ENCODE measurements at regions of chr19 and their contacts with region 1.

Region 1: DNA sequence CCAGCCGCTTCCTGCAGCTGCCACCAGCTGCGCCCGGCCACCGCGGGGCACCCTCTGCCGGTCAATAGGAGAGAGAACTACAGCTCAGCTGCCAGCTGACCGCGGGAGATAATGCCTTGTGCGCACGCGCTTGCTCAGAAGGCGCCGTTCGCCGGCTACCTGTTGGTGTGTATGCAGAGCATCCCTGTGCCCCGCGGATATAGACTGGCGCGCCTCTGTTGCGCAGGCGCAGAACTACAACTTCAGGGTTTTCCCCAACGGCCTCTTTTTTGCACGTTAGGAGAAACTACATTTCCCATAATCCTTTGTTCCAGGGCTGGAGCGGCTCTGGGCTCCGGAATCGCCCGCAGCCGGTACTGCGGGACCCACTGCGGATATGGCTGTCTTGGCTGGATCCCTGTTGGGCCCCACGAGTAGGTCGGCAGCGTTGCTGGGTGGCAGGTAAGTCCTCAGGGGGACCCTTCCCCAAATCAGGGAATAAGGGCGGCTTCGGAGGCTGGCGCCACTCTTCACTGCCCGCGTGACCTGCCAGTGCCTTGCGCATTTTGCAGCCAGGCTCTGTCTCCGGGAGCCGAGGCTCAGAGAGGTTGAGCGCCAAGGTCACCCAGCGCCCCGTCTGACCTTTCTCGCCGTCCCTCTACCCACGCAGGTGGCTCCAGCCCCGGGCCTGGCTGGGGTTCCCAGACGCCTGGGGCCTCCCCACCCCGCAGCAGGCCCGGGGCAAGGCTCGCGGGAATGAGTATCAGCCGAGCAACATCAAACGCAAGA is at the start of gene MRPL34:
- DNase-seq: peak; percentile 97
- H3K4me3 Mint-ChIP-seq: peak within 1 kb of the TSS; percentile 89
- H3K27ac Mint-ChIP-seq: peak within 1 kb of the TSS; percentile 85
- H3K4me1 Mint-ChIP-seq: peaks cover 67% of the 10 kb centered on the region
- H3K27me3 Mint-ChIP-seq: no peaks in the 10 kb centered on the region

Region 2: GRCh38 chr19:17266975-17267788 is 38.5 kb before region 1 on chr19 and contains the start of gene BABAM1:
- CTCF ChIA-PET with region 1: no interaction called
- DNase-seq: peak; percentile 98
- H3K4me3 Mint-ChIP-seq: peak within 1 kb of the TSS; percentile 80
- H3K27ac Mint-ChIP-seq: peak within 1 kb of the TSS; percentile 85
- H3K4me1 Mint-ChIP-seq: peaks cover 40% of the 10 kb centered on the region
- H3K27me3 Mint-ChIP-seq: no peaks in the 10 kb centered on the region

Region 3: GRCh38 chr19:17292286-17293097 is 13.2 kb before region 1 on chr19:
- CTCF ChIA-PET with region 1: interaction called, 13 read pairs
- DNase-seq: peak; percentile 85
- H3K4me3 Mint-ChIP-seq: peak overlapping the region; percentile 87
- H3K27ac Mint-ChIP-seq: peak overlapping the region; percentile 87
- H3K4me1 Mint-ChIP-seq: peaks cover 12% of the 10 kb centered on the region
- H3K27me3 Mint-ChIP-seq: peaks cover 17% of the 10 kb centered on the region

Region 4: DNA sequence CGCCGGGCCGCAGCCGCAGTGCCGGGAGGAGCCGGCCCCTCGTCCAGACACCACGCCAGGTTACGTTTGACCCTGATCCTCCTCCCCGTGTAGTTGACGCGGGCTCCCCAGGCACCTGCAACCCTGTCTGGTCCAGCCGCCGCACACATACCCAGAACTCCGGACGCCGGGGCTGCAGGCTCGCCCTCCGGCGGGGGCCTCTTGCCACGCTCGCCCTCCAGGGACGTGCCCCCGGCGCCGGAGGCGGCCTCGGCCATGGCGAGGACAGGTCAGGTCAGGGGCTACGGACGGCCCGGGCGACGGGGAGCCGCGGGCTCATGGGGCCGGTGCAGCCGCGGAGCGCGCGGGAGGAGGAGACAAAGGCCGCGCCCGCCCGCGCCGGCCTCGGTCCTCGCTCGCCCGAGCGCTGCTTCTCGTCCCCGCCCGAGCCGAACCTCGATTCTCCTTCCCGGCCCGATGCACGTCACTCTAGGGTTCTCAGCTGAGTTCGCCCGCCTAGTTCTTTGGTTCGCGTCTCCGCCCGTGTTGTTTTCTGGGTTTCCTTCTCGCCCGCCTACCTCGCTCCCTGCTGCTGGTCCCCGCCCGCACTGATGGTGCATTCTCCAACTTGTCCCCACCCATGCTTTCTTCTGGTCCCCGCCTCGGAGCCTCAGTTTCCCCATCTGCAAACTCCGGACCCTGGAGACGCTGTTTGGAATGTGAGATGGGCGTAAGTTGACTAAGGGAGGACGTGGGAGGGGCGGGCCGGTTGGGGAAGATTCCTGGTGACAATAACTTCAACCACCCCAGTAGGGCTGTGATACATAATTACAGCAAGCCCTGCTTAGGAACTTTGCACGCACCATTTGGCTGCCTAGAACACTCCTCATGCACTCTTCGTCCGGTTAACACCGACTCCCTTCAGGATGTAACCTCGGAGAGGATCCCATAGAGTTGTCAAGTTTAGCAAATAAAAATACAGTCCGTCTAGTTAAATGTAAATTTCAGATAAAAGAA is 29.0 kb after region 1 on chr19 and contains the start of gene ANO8:
- CTCF ChIA-PET with region 1: interaction called, 10 read pairs
- DNase-seq: peak; percentile 97
- H3K4me3 Mint-ChIP-seq: peak within 1 kb of the TSS; percentile 78
- H3K27ac Mint-ChIP-seq: peak within 1 kb of the TSS; percentile 88
- H3K4me1 Mint-ChIP-seq: peaks cover 59% of the 10 kb centered on the region
- H3K27me3 Mint-ChIP-seq: peaks cover 27% of the 10 kb centered on the region

Region 5: GRCh38 chr19:17358395-17358794 is 52.7 kb after region 1 on chr19:
- CTCF ChIA-PET with region 1: no interaction called
- DNase-seq: no peak
- H3K4me3 Mint-ChIP-seq: no peak overlapping the region
- H3K27ac Mint-ChIP-seq: no peak overlapping the region
- H3K4me1 Mint-ChIP-seq: no peaks in the 10 kb centered on the region
- H3K27me3 Mint-ChIP-seq: peaks cover 19% of the 10 kb centered on the region

Region 6: GRCh38 chr19:17390665-17391370 is 85.1 kb after region 1 on chr19:
- CTCF ChIA-PET with region 1: interaction called, 12 read pairs
- DNase-seq: peak; percentile 92
- H3K4me3 Mint-ChIP-seq: peak overlapping the region; percentile 81
- H3K27ac Mint-ChIP-seq: no peak overlapping the region
- H3K4me1 Mint-ChIP-seq: peaks cover 30% of the 10 kb centered on the region
- H3K27me3 Mint-ChIP-seq: peaks cover 55% of the 10 kb centered on the region

Region 7: GRCh38 chr19:17441241-17442021 is 135.7 kb after region 1 on chr19:
- CTCF ChIA-PET with region 1: no interaction called
- DNase-seq: peak; percentile 35
- H3K4me3 Mint-ChIP-seq: no peak overlapping the region
- H3K27ac Mint-ChIP-seq: no peak overlapping the region
- H3K4me1 Mint-ChIP-seq: no peaks in the 10 kb centered on the region
- H3K27me3 Mint-ChIP-seq: peaks cover 17% of the 10 kb centered on the region

Region 8: DNA sequence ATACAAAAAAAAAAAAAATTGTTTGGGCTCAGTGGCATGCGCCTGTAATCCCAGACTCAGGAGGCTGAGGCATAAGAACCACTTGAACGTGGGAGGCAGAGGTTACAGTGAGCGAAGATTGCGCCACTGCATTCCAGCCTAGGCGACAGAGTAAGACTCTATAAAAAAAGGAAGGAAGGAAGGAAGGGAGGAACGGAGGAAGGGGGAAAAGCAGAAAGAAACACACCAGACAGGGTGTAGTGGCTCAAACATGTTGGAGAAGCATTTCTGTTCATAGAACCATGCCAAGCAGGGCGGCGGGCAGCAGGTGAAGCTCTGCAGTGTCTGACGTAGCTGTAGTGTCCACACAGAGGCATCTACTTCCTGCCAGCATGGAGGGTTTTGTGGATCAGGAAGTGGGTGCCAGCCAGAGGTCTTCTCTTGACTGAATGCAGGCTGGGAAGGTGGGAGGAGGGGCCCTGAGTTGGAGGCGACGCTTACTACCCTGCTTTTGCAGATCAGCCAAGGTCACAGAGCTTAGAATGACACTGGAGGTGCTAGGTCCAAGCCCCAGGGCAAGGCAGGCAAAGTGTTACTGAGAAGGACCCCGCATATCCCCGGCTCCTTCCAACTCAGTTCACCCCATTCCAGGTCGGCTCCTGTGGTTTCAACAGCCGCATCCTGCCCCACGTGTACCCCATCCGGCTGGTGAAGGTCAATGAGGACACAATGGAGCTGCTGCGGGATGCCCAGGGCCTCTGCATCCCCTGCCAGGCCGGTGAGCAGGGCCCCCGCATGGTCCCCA is 194.1 kb after region 1 on chr19:
- CTCF ChIA-PET with region 1: no interaction called
- DNase-seq: no peak
- H3K4me3 Mint-ChIP-seq: no peak overlapping the region
- H3K27ac Mint-ChIP-seq: no peak overlapping the region
- H3K4me1 Mint-ChIP-seq: peaks cover 27% of the 10 kb centered on the region
- H3K27me3 Mint-ChIP-seq: no peaks in the 10 kb centered on the region